ENCODE measurements at regions of chr6 and their contacts with region 1.

Region 1: DNA sequence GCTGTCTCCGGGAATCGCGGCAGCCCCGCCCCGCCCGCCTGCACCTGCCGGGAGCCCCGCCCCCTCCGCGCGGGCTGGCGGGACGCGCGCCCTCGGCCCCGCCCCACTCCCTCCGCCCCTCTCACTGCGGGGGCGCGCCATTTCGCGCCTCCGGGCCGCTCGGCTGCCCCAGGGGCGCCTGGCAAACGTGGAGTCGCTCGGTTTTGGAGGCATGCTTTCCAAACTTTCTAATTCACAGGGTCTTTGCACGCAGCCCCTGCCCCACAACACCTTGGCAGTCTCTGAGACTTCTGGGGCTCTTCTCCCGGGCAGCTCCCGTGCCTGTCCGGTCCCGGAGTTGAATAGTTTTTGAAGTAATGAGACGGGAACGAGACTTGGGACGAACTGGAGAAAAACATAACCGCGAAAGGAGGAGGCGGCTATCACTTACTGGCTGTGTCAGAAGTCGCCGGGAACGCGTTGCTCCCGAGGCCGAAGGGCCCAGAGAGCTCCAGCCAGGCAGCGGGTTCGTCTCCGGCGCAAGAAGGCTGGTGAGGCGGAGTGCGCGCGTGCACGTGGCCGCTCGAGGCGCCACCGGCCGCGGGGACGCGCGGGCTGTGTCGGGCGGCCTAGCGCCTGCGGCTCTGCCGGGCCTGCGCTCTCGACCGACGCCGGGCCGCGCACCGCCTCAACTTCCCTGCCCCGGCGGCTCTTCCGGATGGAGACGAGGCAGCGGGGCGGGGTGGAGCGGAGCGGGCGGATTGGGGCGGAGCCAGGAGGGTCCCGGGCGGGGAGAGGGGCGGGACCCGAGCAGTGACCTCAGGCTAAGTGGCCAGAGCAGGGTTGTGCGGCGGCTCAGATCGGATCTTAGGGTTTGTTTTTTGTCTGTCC is at the start of gene MCM9:
- DNase-seq: peak; percentile 88 to 93
- H3K4me3 ChIP-seq: peak within 1 kb of the TSS; percentile 92
- H3K4me3 Mint-ChIP-seq: peak within 1 kb of the TSS; percentile 87
- H3K27ac Mint-ChIP-seq: peak within 1 kb of the TSS; percentile 77
- H3K4me1 ChIP-seq: no peaks in the 10 kb centered on the region
- H3K4me1 Mint-ChIP-seq: peaks cover 16% of the 10 kb centered on the region
- H3K27me3 ChIP-seq: no peaks in the 10 kb centered on the region
- H3K27me3 Mint-ChIP-seq: no peaks in the 10 kb centered on the region
- CTCF ChIP-seq: no peak
- total RNA-seq, gene MCM9: 13.4 and 14.4 TPM in 2 replicates

Region 2: DNA sequence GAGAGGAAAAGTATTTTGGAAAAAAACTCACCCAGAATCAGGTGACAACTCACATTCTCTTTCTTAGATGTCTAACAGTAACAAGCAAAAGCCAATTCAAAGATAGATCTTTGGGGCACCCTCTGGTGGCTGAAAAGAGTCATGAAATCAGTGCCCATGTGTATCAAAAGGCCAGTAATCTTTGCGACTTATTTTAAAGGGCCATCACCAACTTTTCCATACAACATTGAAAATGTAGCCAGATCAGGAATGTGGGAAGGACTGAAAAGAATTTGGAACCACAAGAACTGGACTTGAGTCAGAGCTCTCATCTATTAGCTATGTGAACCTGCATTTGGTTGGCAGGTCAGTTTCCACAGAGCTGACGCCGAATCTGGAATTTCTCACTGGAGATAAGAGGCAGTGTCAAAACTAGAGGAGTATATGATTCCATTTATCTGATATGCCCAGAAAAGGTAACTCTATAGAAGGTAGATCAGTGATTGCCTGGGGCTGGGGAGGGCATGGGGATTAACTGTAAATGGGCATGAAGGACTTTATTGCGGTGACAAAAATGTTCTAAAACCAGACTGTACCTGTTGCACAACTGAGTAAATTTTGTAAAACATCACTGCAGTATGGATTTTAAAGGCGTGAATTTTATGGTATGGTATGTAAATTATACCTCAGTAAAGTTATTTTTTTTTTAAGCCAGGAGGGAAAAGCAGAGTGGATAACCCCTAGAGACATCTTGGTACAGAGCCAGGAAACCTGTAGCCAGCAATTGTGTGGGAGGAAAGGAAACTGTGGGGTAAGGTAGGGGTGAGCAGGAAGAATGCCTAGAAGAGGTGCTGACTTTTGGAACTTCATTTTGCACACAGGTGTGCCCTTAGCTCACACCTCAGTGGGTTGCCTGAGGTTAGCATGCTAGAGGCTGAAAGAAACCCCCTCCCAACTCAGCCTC is 157.8 kb before region 1 on chr6:
- CTCF ChIA-PET with region 1: no interaction called
- POLR2A ChIA-PET with region 1: no interaction called
- intact Hi-C with region 1: no loop called
- DNase-seq: peak in 1 of 2 experiments; percentile 65
- H3K4me3 ChIP-seq: no peak overlapping the region
- H3K4me3 Mint-ChIP-seq: no peak overlapping the region
- H3K27ac Mint-ChIP-seq: no peak overlapping the region
- H3K4me1 ChIP-seq: no peaks in the 10 kb centered on the region
- H3K4me1 Mint-ChIP-seq: no peaks in the 10 kb centered on the region
- H3K27me3 ChIP-seq: no peaks in the 10 kb centered on the region
- H3K27me3 Mint-ChIP-seq: peaks cover 19% of the 10 kb centered on the region
- CTCF ChIP-seq: peak; percentile 62 to 71

Region 3: GRCh38 chr6:118893807-118894424 is 40.8 kb before region 1 on chr6 and contains the start of gene ASF1A:
- CTCF ChIA-PET with region 1: no interaction called
- POLR2A ChIA-PET with region 1: no interaction called
- intact Hi-C with region 1: loop called (anchors 2 kb)
- DNase-seq: peak; percentile 97 to 98
- H3K4me3 ChIP-seq: peak within 1 kb of the TSS; percentile 95
- H3K4me3 Mint-ChIP-seq: peak within 1 kb of the TSS; percentile 81
- H3K27ac Mint-ChIP-seq: peak within 1 kb of the TSS; percentile 98
- H3K4me1 ChIP-seq: peaks cover 6% of the 10 kb centered on the region; the same call in 1 of the 2 replicates
- H3K4me1 Mint-ChIP-seq: no peaks in the 10 kb centered on the region
- H3K27me3 ChIP-seq: no peaks in the 10 kb centered on the region
- H3K27me3 Mint-ChIP-seq: no peaks in the 10 kb centered on the region
- CTCF ChIP-seq: peak; percentile 42 to 67
- total RNA-seq, gene ASF1A: 21.9 and 22.5 TPM in 2 replicates

Region 4: DNA sequence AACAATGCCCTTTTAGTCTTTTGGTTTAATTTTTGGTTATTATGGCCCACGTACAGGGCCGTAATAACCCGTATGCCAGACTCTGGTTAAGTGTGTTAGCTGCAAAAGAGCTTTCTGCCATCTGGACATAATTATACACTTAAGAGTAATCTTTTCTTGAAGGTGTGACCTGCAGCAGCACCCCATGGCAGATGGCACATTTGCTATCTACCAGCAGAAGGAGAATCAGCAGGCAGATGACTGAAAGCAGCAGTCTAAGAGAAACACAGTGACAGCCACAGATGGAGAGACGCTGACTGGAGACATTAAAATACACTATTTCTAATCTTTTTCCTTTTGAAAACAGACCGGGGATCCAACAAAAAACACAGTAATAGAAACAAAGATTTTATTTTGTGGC is 22.1 kb before region 1 on chr6:
- CTCF ChIA-PET with region 1: no interaction called
- POLR2A ChIA-PET with region 1: no interaction called
- intact Hi-C with region 1: no loop called
- DNase-seq: no peak
- H3K4me3 ChIP-seq: no peak overlapping the region
- H3K4me3 Mint-ChIP-seq: no peak overlapping the region
- H3K27ac Mint-ChIP-seq: no peak overlapping the region
- H3K4me1 ChIP-seq: peaks cover 7% of the 10 kb centered on the region
- H3K4me1 Mint-ChIP-seq: no peaks in the 10 kb centered on the region
- H3K27me3 ChIP-seq: no peaks in the 10 kb centered on the region
- H3K27me3 Mint-ChIP-seq: no peaks in the 10 kb centered on the region
- CTCF ChIP-seq: no peak

Region 5: GRCh38 chr6:119158057-119158848 is 223.6 kb after region 1 on chr6:
- CTCF ChIA-PET with region 1: no interaction called
- POLR2A ChIA-PET with region 1: no interaction called
- intact Hi-C with region 1: no loop called
- DNase-seq: no peak
- H3K4me3 ChIP-seq: no peak overlapping the region
- H3K4me3 Mint-ChIP-seq: no peak overlapping the region
- H3K27ac Mint-ChIP-seq: no peak overlapping the region
- H3K4me1 ChIP-seq: no peaks in the 10 kb centered on the region; the same call in 1 of the 2 replicates
- H3K4me1 Mint-ChIP-seq: no peaks in the 10 kb centered on the region
- H3K27me3 ChIP-seq: no peaks in the 10 kb centered on the region
- H3K27me3 Mint-ChIP-seq: no peaks in the 10 kb centered on the region
- CTCF ChIP-seq: no peak